HEK293 (cell line): ENCODE measurements at regions of chr7 and their contacts with region 1.

Region 1: DNA sequence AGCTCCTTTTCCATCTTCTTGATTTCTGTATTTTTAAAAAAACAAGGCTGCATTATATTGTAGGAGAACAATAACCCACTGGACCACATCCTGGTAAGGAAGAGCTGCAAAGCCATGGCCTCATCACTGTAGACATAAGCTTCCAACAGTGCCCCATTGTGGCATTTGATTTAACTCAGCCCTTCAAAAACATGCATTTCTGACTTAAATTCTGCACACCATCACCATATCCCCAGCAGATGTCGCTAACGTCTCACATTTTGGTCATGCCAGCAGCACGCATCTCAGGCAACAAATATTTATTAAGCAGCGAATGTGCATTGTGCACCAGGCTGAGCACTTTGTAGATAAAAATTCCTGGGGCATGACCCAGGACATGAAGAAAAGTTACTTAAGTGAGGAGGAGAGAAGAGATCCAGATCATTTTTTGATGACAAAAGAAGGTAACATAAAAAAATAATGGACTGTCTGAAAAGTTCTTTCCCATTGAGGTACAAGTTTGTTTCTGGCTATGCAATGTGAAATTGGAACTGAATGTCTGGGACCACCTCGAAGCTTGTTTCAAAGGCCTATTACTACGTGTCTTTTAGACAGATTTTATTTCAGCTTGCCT is 164.6 kb upstream of the CDCA7L start:
- H3K4me3 ChIP-seq: no peak overlapping the region
- H3K27ac ChIP-seq: no peak overlapping the region
- H3K4me1 ChIP-seq: no peaks in the 10 kb centered on the region
- CTCF ChIP-seq: peak; percentile 82

Region 2: GRCh38 chr7:22008087-22008486 is 102.2 kb before region 1 on chr7:
- CTCF ChIA-PET with region 1: no interaction called
- POLR2A ChIA-PET with region 1: no interaction called
- H3K4me3 ChIP-seq: no peak overlapping the region
- H3K27ac ChIP-seq: no peak overlapping the region
- H3K4me1 ChIP-seq: no peaks in the 10 kb centered on the region
- CTCF ChIP-seq: no peak

Region 3: GRCh38 chr7:22066484-22066883 is 43.8 kb before region 1 on chr7:
- CTCF ChIA-PET with region 1: no interaction called
- POLR2A ChIA-PET with region 1: no interaction called
- H3K4me3 ChIP-seq: no peak overlapping the region
- H3K27ac ChIP-seq: no peak overlapping the region
- H3K4me1 ChIP-seq: no peaks in the 10 kb centered on the region
- CTCF ChIP-seq: no peak

Region 4: DNA sequence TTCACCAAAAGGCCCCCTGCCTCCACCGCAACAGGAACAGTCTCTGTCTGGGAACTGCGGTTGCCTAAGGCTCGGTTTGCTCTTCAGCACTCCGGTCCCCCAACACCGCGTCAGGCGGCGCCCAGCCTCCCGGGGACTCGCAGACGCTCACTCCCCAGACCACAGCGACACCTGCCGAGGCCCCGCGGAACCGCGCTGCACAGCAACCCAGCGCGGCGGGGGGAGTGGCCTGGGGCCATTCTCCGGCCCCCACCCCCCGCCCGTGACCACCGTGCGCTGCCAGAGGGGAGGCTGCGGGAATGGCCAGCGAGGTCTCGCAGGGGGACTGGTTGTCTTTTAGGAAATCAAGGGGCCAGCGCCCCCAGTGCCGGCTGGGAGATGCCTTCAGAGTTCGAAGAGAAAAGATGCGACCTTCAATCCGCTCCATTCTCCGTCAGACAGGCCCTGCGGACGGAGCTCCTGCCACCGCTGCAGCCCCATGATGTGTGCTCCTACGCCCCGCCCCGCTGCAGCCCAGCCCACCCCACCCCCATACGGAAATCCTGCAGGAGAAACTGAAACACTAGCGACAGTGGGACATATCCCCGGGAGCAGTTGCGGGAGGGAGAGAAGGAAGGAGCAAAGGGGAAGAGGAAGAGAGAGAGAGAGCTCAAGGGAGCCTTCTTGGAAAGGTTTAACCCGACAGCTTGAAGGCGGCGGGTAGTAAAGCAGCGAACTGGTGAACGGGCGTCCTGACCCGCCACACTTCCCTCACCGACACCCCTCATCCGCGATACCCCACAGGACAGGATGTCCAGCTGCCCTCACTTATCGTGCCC is 27.2 kb before region 1 on chr7:
- CTCF ChIA-PET with region 1: interaction called, 21 read pairs
- POLR2A ChIA-PET with region 1: no interaction called
- H3K4me3 ChIP-seq: peak overlapping the region; percentile 63
- H3K27ac ChIP-seq: peak overlapping the region; percentile 47; the same call in 1 of the 2 replicates
- H3K4me1 ChIP-seq: 0 out of 2 replicates have a peak, but pooled peaks cover 3% of the 10 kb centered on the region
- CTCF ChIP-seq: peak; percentile 99

Region 5: DNA sequence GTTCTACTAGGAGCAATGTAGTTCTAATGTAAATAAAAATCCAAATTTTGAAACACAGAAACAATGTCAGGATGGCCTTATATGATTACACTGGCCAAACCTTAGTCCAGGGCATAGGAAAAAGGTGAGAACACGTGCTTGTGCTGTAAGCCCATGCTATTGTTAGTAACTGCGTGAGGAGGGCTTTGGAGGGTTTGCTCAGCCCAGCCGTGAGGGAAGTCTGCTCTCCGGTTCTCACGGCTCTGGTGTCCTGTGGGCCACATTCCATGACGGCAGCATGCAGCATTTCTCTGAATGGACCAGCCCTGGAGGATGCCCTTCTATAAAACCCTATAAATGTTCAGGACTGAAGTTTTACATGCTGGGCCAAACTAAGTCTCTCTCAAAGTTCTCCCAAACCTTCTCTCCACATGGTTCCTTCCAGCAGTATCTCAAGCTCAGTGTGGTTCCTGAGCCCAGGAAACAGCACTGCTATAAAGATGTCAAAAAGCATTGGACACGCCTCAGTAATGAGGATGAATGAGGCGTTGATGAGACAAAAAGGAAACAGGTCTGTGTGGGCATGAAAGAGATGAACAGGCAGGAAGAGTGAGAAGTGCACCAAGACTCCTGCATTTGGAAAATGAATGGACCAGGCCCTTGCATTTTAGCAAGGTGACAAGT is 10.2 kb after region 1 on chr7:
- CTCF ChIA-PET with region 1: interaction called, 22 read pairs
- POLR2A ChIA-PET with region 1: no interaction called
- H3K4me3 ChIP-seq: no peak overlapping the region
- H3K27ac ChIP-seq: no peak overlapping the region
- H3K4me1 ChIP-seq: peaks cover 6% of the 10 kb centered on the region
- CTCF ChIP-seq: no peak

Region 6: DNA sequence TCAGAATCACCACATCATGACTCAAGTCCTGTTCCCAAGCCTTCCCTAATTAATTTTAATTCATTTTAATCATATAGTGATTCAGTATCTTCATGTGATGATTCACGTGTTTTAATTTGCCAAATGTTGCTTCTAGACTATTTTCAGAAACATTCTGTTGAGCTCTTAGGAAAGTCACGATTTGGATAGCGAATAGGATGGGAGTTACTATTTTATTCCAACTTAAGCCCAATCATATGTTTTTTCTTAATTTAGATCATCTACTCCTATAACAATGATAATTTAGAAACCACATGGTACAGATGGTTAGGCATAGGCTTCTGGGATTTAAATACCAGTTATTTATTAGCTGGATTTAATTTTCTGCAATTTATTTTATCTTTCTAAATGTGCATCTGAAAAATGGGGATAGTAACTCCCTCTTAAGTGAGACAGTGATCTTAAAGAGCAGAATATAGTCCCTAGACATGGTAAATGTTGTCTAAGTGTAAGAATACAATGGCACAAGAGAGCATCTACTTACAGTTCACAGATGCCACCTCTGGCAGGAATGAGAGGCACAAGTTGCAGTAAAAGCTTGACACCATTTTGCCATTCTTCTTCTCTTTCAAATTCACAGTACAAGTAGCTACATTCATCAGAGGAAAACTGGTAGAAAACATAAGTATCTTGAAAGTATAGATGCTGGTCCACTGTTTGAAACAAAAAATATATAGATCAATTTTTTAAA is 197.6 kb after region 1 on chr7:
- CTCF ChIA-PET with region 1: interaction called, 11 read pairs
- POLR2A ChIA-PET with region 1: no interaction called
- H3K4me3 ChIP-seq: no peak overlapping the region
- H3K27ac ChIP-seq: no peak overlapping the region
- H3K4me1 ChIP-seq: no peaks in the 10 kb centered on the region
- CTCF ChIP-seq: no peak

Region 7: GRCh38 chr7:22488643-22489462 is 378.5 kb after region 1 on chr7:
- CTCF ChIA-PET with region 1: interaction called, 48 read pairs
- POLR2A ChIA-PET with region 1: no interaction called
- H3K4me3 ChIP-seq: no peak overlapping the region
- H3K27ac ChIP-seq: no peak overlapping the region
- H3K4me1 ChIP-seq: no peaks in the 10 kb centered on the region
- CTCF ChIP-seq: peak; percentile 69